PC-3 (cell line): ENCODE measurements at regions of chr10 and their contacts with region 1.

Region 1: DNA sequence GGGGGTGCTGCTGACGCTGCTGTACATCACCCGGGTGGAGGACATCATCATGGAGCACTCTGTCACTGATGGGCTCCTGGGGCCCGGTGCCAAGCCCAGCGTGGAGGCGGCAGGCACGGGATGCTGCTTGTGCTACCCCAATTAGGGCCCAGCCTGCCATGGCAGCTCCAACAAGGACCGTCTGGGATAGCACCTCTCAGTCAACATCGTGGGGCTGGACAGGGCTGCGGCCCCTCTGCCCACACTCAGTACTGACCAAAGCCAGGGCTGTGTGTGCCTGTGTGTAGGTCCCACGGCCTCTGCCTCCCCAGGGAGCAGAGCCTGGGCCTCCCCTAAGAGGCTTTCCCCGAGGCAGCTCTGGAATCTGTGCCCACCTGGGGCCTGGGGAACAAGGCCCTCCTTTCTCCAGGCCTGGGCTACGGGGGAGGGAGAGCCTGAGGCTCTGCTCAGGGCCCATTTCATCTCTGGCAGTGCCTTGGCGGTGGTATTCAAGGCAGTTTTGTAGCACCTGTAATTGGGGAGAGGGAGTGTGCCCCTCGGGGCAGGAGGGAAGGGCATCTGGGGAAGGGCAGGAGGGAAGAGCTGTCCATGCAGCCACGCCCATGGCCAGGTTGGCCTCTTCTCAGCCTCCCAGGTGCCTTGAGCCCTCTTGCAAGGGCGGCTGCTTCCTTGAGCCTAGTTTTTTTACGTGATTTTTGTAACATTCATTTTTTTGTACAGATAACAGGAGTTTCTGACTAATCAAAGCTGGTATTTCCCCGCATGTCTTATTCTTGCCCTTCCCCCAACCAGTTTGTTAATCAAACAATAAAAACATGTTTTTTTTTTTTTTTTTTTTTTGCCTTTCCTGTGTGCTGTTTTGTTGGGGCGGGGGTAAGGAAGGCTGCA is 55.8 kb downstream of the TSPAN15 start:
- DNase-seq: peak; percentile 85
- ATAC-seq: peak; percentile 42
- H3K4me3 ChIP-seq: peak overlapping the region; percentile 43; the same call in 1 of the 2 replicates
- H3K27ac ChIP-seq: peak overlapping the region; percentile 78
- H3K4me1 ChIP-seq: peaks cover 19% of the 10 kb centered on the region
- H3K27me3 ChIP-seq: no peaks in the 10 kb centered on the region
- CTCF ChIP-seq: no peak

Region 2: DNA sequence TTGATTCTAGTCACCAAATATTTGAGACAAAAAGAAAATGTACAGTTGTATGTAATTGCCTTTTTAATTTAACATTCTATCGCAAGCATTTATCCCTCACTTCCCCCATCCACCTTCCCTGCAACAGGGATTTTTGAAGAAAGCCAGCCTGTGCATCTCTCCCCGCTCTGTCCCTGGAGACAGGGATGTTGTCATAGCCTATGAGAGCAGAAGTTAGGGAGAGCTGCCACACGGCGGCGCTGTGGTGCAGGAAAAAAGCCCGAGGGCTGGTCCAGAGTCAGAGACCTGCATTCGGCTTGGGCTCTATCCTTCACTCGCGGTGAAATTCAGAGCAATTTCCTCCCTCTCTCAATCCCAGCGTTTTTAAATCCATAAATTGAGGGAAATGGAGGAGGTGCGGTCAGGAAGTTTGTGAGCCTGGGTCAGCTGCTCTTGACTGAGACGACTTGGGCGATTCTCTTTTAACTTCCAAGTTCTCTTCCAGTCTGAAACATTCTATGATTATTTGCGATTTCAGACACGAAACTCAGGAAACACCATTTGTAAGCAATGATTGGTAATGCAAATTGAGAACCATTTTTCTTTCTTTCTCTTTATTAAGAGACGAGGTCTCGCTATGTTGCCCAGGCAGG is 269.4 kb before region 1 on chr10:
- CTCF ChIA-PET with region 1: no interaction called
- POLR2A ChIA-PET with region 1: no interaction called
- intact Hi-C with region 1: loop called (anchors 5 kb)
- DNase-seq: peak; percentile 98
- ATAC-seq: peak; percentile 94
- H3K4me3 ChIP-seq: no peak overlapping the region
- H3K27ac ChIP-seq: no peak overlapping the region
- H3K4me1 ChIP-seq: peaks cover 31% of the 10 kb centered on the region
- H3K27me3 ChIP-seq: no peaks in the 10 kb centered on the region
- CTCF ChIP-seq: peak; percentile 99

Region 3: DNA sequence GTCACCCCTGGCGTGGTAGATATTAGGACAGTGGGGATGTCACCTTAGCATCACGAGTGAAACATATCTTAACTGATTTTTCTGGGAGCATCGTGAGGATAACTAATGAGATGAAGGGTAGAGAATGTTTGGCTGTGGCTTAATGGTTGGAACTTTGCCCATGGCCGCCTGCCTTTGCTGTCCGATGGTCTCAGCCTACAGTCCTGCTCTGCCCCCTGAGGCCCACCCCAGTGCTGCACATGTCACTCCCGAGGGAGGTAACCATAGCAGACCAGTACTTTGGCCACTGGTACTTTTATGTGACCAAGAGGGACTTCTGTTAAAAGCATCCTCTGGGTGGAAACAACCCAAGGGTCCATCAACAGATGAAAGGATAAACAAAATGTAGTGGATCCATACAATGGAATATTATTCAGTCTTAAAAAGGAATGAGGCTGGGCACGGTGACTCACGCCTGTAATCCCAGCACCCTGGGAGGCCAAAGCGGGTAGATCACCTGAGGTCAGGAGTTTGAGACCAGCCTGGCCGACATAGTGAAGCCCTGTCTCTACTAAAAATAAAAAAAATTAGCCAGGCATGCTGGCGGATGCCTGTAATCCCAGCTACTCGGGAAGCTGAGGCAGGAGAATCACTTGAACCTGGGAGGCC is 148.8 kb before region 1 on chr10:
- CTCF ChIA-PET with region 1: no interaction called
- POLR2A ChIA-PET with region 1: no interaction called
- intact Hi-C with region 1: no loop called
- DNase-seq: no peak
- ATAC-seq: no peak
- H3K4me3 ChIP-seq: no peak overlapping the region
- H3K27ac ChIP-seq: no peak overlapping the region
- H3K4me1 ChIP-seq: peaks cover 46% of the 10 kb centered on the region
- H3K27me3 ChIP-seq: no peaks in the 10 kb centered on the region
- CTCF ChIP-seq: no peak

Region 4: GRCh38 chr10:69425511-69426298 is 81.4 kb before region 1 on chr10:
- CTCF ChIA-PET with region 1: interaction called, 18 read pairs
- POLR2A ChIA-PET with region 1: interaction called, 6 read pairs
- intact Hi-C with region 1: loop called (anchors 1 kb)
- DNase-seq: peak; percentile 89
- ATAC-seq: peak; percentile 52; the same call in 1 of the 2 replicates
- H3K4me3 ChIP-seq: no peak overlapping the region
- H3K27ac ChIP-seq: 0 out of 2 replicates have a peak overlapping the region, but pooled peaks have one; percentile 1
- H3K4me1 ChIP-seq: peaks cover 19% of the 10 kb centered on the region
- H3K27me3 ChIP-seq: no peaks in the 10 kb centered on the region
- CTCF ChIP-seq: no peak

Region 5: GRCh38 chr10:69451209-69451783 is 55.8 kb before region 1 on chr10 and contains the start of gene TSPAN15:
- CTCF ChIA-PET with region 1: interaction called, 13 read pairs
- POLR2A ChIA-PET with region 1: no interaction called
- intact Hi-C with region 1: loop called (anchors 1 kb)
- DNase-seq: peak; percentile 99
- ATAC-seq: peak; percentile 54
- H3K4me3 ChIP-seq: peak within 1 kb of the TSS; percentile 80
- H3K27ac ChIP-seq: peak within 1 kb of the TSS; percentile 89
- H3K4me1 ChIP-seq: peaks cover 86% of the 10 kb centered on the region
- H3K27me3 ChIP-seq: no peaks in the 10 kb centered on the region
- CTCF ChIP-seq: no peak
- total RNA-seq, gene TSPAN15: 186 and 212 TPM in 2 replicates

Region 6: DNA sequence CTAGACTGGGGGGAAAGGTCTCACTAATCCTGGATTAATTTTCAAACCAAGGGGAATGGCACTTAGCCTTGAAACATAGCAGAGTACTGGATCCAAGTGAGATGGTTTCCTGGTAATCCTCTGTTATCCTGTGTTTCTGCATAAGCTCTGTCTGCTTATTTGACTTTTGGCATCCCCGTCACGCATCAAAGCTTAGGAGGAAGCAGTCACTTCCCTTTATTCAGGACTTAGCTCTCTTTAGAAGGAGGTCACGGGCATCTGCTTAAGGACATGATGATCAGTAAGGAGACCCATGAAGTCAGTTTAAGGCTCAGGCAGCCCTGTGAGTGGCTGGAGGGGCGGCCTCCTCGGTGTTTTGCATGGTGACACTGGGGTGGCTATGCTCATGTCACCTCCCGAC is 25.8 kb before region 1 on chr10:
- CTCF ChIA-PET with region 1: no interaction called
- POLR2A ChIA-PET with region 1: no interaction called
- intact Hi-C with region 1: no loop called
- DNase-seq: no peak
- ATAC-seq: no peak
- H3K4me3 ChIP-seq: no peak overlapping the region
- H3K27ac ChIP-seq: no peak overlapping the region
- H3K4me1 ChIP-seq: no peaks in the 10 kb centered on the region
- H3K27me3 ChIP-seq: no peaks in the 10 kb centered on the region
- CTCF ChIP-seq: no peak

Region 7: GRCh38 chr10:69527961-69528360 is 20.9 kb after region 1 on chr10:
- CTCF ChIA-PET with region 1: no interaction called
- POLR2A ChIA-PET with region 1: interaction called, 18 read pairs
- intact Hi-C with region 1: no loop called
- DNase-seq: no peak
- ATAC-seq: no peak
- H3K4me3 ChIP-seq: no peak overlapping the region
- H3K27ac ChIP-seq: no peak overlapping the region
- H3K4me1 ChIP-seq: no peaks in the 10 kb centered on the region
- H3K27me3 ChIP-seq: no peaks in the 10 kb centered on the region
- CTCF ChIP-seq: no peak